Activated CD4-positive, alpha-beta T cell treated with anti-CD3 and anti-CD28 coated beads for 36 hours (primary cell): ENCODE measurements at regions of chr11 and their contacts with region 1.

Region 1: GRCh38 chr11:65961232-65961901 is at the start of gene SART1:
- DNase-seq: peak; percentile 98
- ATAC-seq: peak; percentile 91
- H3K4me3 Mint-ChIP-seq: peak within 1 kb of the TSS; percentile 92
- H3K27ac Mint-ChIP-seq: peak within 1 kb of the TSS; percentile 97
- H3K4me1 Mint-ChIP-seq: peaks cover 37% of the 10 kb centered on the region
- H3K27me3 Mint-ChIP-seq: no peaks in the 10 kb centered on the region
- total RNA-seq, gene SART1: 54.7 to 84.5 TPM

Region 2: DNA sequence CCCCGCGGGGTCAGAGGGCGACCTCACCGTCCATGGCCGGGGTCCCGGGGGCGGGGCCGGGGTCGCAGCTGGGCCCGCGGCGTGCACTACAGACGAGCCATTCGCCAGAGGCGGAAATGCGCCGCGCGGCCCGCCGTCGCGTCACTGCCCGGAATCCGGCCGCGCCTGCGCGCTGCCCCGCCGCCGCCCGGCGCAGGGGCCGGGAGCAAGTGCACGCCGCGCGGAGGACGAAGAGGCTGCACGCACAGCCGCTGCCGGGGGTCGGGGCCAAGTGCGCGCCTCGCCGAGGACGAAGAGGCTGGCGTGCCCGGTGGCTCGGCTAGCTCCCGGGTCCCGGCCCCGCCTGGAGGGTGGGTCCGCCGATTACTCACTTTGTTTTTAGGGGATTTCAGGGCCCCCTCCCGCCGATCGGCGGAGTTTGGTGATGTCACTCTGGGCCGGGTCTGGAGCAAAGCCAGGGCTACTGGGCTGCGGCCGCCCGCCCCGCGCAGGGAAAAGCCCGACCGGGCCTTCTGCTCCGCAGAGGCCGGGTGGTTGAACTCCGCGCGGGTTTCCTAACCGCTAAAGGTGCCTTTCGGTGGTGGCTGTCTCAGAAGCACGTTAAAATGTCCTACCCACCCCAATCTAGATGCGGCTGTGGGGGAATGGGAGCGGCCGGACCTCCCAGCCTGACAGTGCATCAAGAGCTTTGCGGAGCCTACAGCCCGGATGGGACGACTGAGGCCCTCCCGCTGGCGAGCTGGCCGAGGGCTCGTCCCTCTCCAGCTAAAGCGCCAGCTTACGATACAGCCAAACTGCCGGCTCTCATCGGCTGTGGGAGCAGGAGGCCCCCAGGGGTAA is 298.3 kb before region 1 on chr11 and contains the start of gene RELA:
- CTCF ChIA-PET with region 1: no interaction called
- POLR2A ChIA-PET with region 1: no interaction called
- intact Hi-C with region 1: loop called in 1 of 2 experiments (anchors 1 kb)
- DNase-seq: peak; percentile 96
- ATAC-seq: peak; percentile 90
- H3K4me3 Mint-ChIP-seq: peak within 1 kb of the TSS; percentile 88
- H3K27ac Mint-ChIP-seq: peak within 1 kb of the TSS; percentile 97
- H3K4me1 Mint-ChIP-seq: peaks cover 41% of the 10 kb centered on the region
- H3K27me3 Mint-ChIP-seq: no peaks in the 10 kb centered on the region
- total RNA-seq, gene RELA: 76.9 to 109 TPM

Region 3: GRCh38 chr11:65720237-65720934 is 241.0 kb before region 1 on chr11 and contains the start of gene RNASEH2C:
- CTCF ChIA-PET with region 1: no interaction called
- POLR2A ChIA-PET with region 1: no interaction called
- intact Hi-C with region 1: loop called in 1 of 2 experiments (anchors 2 kb)
- DNase-seq: peak; percentile 92
- ATAC-seq: peak; percentile 94
- H3K4me3 Mint-ChIP-seq: peak within 1 kb of the TSS; percentile 84
- H3K27ac Mint-ChIP-seq: peak within 1 kb of the TSS; percentile 88
- H3K4me1 Mint-ChIP-seq: peaks cover 23% of the 10 kb centered on the region
- H3K27me3 Mint-ChIP-seq: no peaks in the 10 kb centered on the region
- total RNA-seq, gene RNASEH2C: 72.5 to 96.8 TPM

Region 4: DNA sequence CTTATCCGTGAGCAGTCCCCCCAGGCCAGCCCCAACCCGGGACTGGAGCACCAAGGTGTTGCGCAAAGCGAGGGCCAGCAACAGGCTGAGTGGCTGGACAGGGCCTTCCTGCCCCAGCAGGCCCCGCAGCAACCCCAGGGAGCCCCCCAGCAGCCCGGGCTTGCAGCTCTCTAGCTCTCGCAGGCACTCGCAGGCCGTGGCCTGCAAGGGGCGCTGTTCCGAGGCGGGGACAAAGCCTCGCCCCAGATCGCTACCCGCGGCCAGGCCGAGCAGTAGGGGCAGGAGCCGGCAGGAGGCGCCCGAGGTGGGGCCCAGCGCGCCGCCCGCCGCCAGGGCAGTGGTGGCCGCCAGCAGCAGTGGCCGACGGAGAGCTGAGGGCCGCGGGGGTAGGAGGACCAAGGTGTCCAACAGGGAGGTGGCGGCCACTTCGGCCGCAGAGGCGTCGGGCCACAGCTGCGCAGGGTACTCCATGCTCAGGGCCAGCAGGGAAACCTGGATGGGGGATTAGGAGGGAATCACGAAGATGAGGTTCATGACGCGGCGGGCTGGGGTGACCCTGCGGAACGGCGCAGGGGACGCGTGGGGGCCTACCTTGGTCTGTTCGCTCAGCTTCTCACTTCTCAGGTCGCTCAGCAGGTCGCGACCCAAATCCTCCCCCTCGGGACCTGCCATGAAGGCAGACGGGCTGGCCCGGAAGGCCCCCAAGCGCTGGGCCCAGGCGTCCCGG is 181.4 kb before region 1 on chr11:
- CTCF ChIA-PET with region 1: no interaction called
- POLR2A ChIA-PET with region 1: no interaction called
- intact Hi-C with region 1: loop called in 1 of 2 experiments (anchors 1 kb)
- DNase-seq: peak; percentile 94
- ATAC-seq: peak; percentile 81
- H3K4me3 Mint-ChIP-seq: peak overlapping the region; percentile 87
- H3K27ac Mint-ChIP-seq: peak overlapping the region; percentile 83
- H3K4me1 Mint-ChIP-seq: peaks cover 27% of the 10 kb centered on the region
- H3K27me3 Mint-ChIP-seq: peaks cover 10% of the 10 kb centered on the region

Region 5: DNA sequence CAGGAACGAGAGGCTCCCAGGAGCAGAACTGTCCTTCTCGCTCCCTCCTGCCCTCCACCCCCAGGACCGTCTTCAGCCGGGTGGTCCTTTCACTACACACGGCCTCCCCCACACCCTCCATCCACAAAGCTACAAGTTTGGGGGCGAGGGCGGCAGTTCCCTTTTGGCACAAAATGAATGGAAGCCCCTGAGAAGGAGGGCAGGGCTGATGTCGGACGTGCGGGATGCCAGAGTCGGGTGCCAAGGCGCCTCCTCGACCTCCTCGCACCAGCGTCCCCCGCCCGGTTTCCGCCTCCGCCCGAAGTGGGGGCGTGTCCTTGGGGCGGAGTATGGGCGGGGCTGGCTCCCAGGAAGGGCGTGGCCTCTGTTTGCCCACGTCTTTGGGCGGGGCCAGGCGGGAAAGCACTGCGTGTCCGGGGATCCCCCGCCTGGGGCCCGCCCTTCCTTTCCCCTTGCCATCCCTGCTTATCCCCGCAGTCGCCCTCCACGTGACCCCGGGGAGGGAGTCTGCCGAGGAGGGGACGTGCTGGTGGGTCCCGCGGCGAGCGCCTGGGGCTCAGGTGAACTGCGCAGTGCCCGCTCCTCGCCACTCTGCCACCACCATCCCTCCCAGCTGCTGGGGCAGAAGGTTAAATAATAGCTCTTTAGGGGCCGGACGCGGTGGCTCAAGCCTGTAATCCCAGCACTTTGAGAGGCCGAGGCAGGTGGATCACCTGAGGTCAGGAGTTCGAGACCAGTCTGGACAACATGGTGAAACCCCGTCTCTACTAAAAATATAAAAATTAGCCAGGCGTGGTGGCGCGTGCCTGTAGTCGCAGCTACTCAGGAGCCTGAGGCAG is 87.8 kb before region 1 on chr11:
- CTCF ChIA-PET with region 1: interaction called, 3 read pairs
- POLR2A ChIA-PET with region 1: no interaction called
- intact Hi-C with region 1: loop called in 1 of 2 experiments (anchors 1 kb)
- DNase-seq: peak; percentile 97
- ATAC-seq: peak; percentile 93
- H3K4me3 Mint-ChIP-seq: peak overlapping the region; percentile 84
- H3K27ac Mint-ChIP-seq: peak overlapping the region; percentile 91
- H3K4me1 Mint-ChIP-seq: peaks cover 15% of the 10 kb centered on the region
- H3K27me3 Mint-ChIP-seq: no peaks in the 10 kb centered on the region

Region 6: GRCh38 chr11:65900125-65900898 is 61.1 kb before region 1 on chr11 and contains the start of gene FOSL1:
- CTCF ChIA-PET with region 1: no interaction called
- POLR2A ChIA-PET with region 1: no interaction called
- intact Hi-C with region 1: loop called in 1 of 2 experiments (anchors 1 kb)
- DNase-seq: peak; percentile 98
- ATAC-seq: peak; percentile 85
- H3K4me3 Mint-ChIP-seq: peak within 1 kb of the TSS; percentile 75
- H3K27ac Mint-ChIP-seq: peak within 1 kb of the TSS; percentile 78
- H3K4me1 Mint-ChIP-seq: peaks cover 35% of the 10 kb centered on the region
- H3K27me3 Mint-ChIP-seq: peaks cover 4% of the 10 kb centered on the region
- total RNA-seq, gene FOSL1: 11.1 to 11.3 TPM

Region 7: GRCh38 chr11:65927904-65928397 is 33.4 kb before region 1 on chr11:
- CTCF ChIA-PET with region 1: no interaction called
- POLR2A ChIA-PET with region 1: interaction called, 3 read pairs
- intact Hi-C with region 1: loop called in 1 of 2 experiments (anchors 2 kb)
- DNase-seq: peak; percentile 88
- ATAC-seq: peak; percentile 94
- H3K4me3 Mint-ChIP-seq: peak overlapping the region; percentile 65
- H3K27ac Mint-ChIP-seq: peak overlapping the region; percentile 96
- H3K4me1 Mint-ChIP-seq: peaks cover 26% of the 10 kb centered on the region
- H3K27me3 Mint-ChIP-seq: no peaks in the 10 kb centered on the region